RWPE1 (cell line): ENCODE measurements at regions of chr3 and their contacts with region 1.

Region 1: DNA sequence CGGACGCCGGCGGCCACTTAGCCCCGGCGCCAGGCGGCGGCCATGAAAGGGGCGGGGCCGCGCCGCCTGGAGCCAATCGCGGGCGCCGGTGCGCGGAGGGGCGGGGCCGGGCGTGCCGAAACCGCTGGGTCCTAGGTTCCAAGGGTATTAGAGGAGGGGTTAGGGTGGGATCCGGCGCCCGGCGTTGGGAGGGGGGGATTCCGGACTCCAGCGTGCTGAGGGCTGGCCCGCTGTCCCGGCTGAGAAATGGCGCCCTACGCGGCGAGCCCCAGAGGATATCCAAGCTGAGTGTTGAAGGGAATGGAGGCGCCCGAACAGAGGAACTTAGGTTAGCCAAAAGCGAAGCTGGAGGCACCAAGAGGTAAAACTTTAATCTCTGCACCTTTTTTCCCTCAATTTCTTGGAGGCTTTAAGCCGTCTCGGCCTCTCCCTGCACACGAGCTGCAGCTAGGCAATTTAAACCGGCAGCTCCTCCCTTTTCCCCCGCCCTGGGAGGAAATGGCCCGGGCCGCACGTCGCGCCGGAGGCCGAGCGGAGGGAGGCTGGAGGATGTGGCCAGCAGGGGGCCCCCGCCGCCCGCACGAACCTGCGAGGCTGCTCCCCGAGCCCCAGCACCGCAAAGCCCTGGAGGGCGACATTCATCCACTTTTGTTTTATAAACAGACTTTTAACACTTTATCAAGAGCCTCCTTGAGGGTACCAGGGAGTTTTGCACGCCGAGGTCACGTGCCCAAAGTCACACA is at the start of gene XXYLT1:
- DNase-seq: peak; percentile 89
- H3K27ac ChIP-seq: peak within 1 kb of the TSS; percentile 91
- CTCF ChIP-seq: peak; percentile 94

Region 2: GRCh38 chr3:194671900-194672808 is 599.1 kb before region 1 on chr3 and contains the start of gene LSG1:
- CTCF ChIA-PET with region 1: interaction called, 13 read pairs
- POLR2A ChIA-PET with region 1: no interaction called
- DNase-seq: peak; percentile 87
- H3K27ac ChIP-seq: peak within 1 kb of the TSS; percentile 74
- CTCF ChIP-seq: no peak

Region 3: GRCh38 chr3:195238586-195239118 is 32.6 kb before region 1 on chr3:
- CTCF ChIA-PET with region 1: no interaction called
- POLR2A ChIA-PET with region 1: no interaction called
- DNase-seq: no peak
- H3K27ac ChIP-seq: peak overlapping the region; percentile 33; the same call in 1 of the 2 replicates
- CTCF ChIP-seq: no peak

Region 4: DNA sequence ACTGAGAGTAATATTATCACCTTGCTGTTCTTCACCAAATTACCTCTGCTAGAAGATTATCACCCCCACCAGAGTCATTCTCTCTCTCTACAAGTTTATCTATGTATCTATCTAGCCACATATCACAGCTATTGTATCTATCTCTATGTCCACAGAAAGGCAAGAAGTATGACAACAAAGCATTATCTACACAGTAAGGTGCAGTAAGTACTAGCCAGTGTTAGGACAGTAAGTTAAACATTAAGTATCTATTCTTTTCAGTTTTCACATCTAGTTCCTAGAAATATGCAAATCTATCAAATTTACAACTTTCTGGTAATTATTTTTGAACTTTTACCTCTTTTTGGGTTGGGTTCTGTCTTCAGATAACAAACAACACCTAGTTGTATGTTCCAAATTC is 26.2 kb after region 1 on chr3:
- CTCF ChIA-PET with region 1: interaction called, 10 read pairs
- POLR2A ChIA-PET with region 1: no interaction called
- DNase-seq: no peak
- H3K27ac ChIP-seq: no peak overlapping the region
- CTCF ChIP-seq: no peak

Region 5: DNA sequence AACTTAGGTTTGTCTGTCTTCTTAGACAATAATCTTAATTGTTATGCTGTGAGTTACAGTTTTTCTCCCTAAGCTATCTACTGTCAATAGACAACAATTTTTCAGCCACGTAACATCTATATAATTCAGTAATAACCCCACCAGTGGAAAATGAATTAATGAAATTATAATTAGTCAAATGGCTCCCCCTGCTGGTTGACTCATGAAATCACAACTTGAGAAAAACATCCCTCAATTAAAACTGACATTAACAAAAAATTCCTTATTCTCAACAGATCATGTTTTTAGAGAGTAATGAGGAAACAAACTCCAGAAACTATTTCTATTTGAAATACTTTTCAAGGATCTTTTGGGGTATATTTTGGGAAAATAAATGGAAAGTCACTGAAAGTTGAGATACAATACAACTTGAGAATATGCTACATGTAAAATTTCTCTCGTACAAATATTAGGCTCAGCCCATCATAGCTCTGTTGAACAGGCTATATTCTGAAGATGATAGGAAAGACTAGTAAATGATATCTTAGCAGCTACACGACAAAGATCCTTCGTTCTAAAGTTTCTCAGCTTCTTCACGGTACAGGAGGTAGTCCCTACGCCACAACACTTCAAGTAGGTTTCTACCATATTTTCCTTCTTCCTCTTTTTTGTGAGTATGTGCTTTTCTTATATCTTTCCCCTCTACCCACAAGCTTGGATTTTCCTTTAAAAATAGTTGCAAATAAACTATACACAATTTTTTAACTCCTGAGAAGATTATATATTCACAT is 251.2 kb after region 1 on chr3:
- CTCF ChIA-PET with region 1: interaction called, 33 read pairs
- POLR2A ChIA-PET with region 1: interaction called, 4 read pairs
- DNase-seq: peak; percentile 54
- H3K27ac ChIP-seq: no peak overlapping the region
- CTCF ChIP-seq: peak; percentile 68